Heart left ventricle (tissue), 16 donors: ENCODE measurements at regions of chr15 and their contacts with region 1.

Region 1: DNA sequence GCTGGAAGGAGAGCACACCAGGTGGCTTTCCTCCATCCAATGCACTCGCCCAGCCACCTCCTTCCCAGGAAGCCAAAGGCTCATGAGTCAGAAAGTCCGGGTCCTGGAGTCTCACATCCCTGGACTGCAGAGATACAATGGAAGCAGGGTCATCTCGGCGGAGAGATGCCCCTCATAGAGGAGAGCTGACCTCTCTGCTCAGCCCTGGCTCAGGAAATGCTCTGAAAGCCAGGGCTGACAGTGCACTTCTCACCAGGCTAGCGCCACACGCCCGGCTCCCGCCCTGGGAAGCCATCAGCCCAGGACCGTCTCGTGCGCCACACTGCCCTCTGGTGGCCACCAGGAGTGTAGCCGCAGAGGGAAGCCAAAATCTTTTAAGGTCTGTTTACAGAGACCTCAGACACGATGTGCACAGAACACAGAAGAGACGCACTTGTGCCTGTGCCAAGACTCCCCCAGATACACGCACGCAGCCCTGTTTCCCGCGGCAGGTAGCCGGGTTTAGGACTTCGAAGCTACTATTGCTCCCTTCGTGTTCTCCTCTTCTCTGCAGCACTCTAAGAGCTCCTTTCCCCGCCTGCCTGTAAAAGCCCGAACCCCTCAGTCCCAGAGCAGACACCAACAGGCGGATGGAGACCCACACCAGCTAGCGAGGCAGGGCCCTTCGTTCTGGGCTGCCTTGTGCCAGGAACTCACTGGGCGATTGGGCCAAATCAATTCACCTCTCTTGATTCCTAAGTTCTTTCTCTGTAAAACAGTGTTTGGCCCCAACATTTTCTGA is 9.7 kb downstream of the NTRK3 start:
- DNase-seq: peak; percentile 56 to 87 (median 76)
- ATAC-seq: peak; percentile 44 to 89 (median 82)
- H3K4me3 ChIP-seq: peak overlapping the region in 3 of 12 donors; percentile 17 to 25 (median 23)
- H3K27ac ChIP-seq: no peak overlapping the region
- H3K4me1 ChIP-seq: peaks cover 0 to 23% (median 4%) of the 10 kb centered on the region in 12 donors
- H3K27me3 ChIP-seq: peaks cover 0 to 6% (median 0%) of the 10 kb centered on the region in 9 donors
- CTCF ChIP-seq: peak; percentile 93 to 99 (median 96)
- POLR2A ChIP-seq: no peak

Region 2: GRCh38 chr15:86915811-86916331 is 1331.0 kb before region 1 on chr15:
- intact Hi-C with region 1: loop called in 8 of 10 experiments (anchors 5 to 10 kb)
- DNase-seq: peak in 2 of 5 donors; percentile 21 to 33
- ATAC-seq: peak; percentile 66 to 81 (median 72)
- H3K4me3 ChIP-seq: no peak overlapping the region
- H3K27ac ChIP-seq: peak overlapping the region in 3 of 12 donors; percentile 68 to 78 (median 69)
- H3K4me1 ChIP-seq: peaks cover 0 to 34% (median 13%) of the 10 kb centered on the region in 12 donors
- H3K27me3 ChIP-seq: no peaks in the 10 kb centered on the region
- CTCF ChIP-seq: peak; percentile 17 to 68 (median 52)
- POLR2A ChIP-seq: no peak

Region 3: GRCh38 chr15:87033056-87033455 is 1213.8 kb before region 1 on chr15:
- intact Hi-C with region 1: loop called in 2 of 10 experiments (anchors 10 kb)
- DNase-seq: no peak
- ATAC-seq: no peak
- H3K4me3 ChIP-seq: no peak overlapping the region
- H3K27ac ChIP-seq: no peak overlapping the region
- H3K4me1 ChIP-seq: peaks cover 0 to 8% (median 0%) of the 10 kb centered on the region in 12 donors
- H3K27me3 ChIP-seq: no peaks in the 10 kb centered on the region
- CTCF ChIP-seq: peak in 4 of 12 donors; percentile 8 to 21 (median 16)
- POLR2A ChIP-seq: no peak

Region 4: DNA sequence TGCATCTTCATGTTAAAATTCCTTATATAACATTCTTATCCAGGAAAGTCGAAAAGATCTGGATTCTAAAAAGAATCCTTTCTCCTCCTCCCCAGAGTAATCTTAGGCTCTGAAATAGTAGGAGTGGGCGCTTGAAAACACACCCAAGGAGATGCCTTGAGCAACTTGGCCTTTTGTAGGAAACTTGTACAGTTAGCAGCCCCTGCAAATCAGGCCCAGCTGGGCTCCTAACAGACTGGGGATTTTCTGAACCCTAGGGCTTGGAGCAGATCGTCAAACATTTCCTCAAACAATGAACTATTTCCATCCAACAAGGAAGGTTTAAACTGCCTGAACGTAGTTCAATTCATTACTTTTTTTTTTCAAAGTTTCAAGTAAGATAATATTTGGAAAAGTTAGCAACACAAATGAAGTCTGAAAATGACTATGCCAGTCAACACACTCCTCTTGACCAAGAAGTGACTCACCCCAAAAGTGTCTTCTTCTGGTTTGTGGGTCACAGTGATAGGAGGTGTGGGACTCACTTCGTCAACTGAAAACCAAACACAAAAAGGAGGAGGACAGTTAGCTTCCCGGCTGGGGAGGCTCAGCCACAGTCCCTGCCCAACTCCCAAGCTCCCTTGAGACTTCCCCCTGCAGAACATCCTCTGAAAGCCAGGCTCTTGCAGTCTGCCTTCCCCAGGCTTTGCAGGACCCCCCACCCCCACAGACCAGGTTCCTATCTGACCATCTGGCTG is 120.0 kb before region 1 on chr15:
- intact Hi-C with region 1: no loop called
- DNase-seq: no peak
- ATAC-seq: no peak
- H3K4me3 ChIP-seq: no peak overlapping the region
- H3K27ac ChIP-seq: no peak overlapping the region
- H3K4me1 ChIP-seq: no peaks in the 10 kb centered on the region
- H3K27me3 ChIP-seq: no peaks in the 10 kb centered on the region
- CTCF ChIP-seq: no peak
- POLR2A ChIP-seq: no peak

Region 5: DNA sequence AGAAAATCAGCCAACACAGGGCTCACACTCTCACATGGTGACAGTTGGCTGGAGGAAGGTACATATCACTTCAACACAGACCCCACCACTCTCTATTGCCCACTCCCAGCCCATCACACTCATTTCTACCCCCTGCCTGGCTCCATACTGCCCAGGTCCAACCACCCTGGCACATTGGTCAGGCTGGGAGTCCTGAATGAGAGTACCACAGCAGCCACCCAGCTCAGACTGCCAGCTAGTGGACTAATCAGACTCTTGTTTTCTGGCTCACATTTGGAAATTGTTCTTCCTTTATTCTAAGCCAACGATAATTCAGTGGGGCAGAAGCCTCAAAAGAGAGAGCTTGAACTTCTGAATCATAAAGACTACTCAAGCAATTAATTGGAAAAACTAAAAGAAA is 200.3 kb after region 1 on chr15:
- intact Hi-C with region 1: loop called in 4 of 10 experiments (anchors 5 to 10 kb)
- DNase-seq: no peak
- ATAC-seq: no peak
- H3K4me3 ChIP-seq: no peak overlapping the region
- H3K27ac ChIP-seq: no peak overlapping the region
- H3K4me1 ChIP-seq: no peaks in the 10 kb centered on the region
- H3K27me3 ChIP-seq: no peaks in the 10 kb centered on the region
- CTCF ChIP-seq: no peak
- POLR2A ChIP-seq: no peak

Region 6: DNA sequence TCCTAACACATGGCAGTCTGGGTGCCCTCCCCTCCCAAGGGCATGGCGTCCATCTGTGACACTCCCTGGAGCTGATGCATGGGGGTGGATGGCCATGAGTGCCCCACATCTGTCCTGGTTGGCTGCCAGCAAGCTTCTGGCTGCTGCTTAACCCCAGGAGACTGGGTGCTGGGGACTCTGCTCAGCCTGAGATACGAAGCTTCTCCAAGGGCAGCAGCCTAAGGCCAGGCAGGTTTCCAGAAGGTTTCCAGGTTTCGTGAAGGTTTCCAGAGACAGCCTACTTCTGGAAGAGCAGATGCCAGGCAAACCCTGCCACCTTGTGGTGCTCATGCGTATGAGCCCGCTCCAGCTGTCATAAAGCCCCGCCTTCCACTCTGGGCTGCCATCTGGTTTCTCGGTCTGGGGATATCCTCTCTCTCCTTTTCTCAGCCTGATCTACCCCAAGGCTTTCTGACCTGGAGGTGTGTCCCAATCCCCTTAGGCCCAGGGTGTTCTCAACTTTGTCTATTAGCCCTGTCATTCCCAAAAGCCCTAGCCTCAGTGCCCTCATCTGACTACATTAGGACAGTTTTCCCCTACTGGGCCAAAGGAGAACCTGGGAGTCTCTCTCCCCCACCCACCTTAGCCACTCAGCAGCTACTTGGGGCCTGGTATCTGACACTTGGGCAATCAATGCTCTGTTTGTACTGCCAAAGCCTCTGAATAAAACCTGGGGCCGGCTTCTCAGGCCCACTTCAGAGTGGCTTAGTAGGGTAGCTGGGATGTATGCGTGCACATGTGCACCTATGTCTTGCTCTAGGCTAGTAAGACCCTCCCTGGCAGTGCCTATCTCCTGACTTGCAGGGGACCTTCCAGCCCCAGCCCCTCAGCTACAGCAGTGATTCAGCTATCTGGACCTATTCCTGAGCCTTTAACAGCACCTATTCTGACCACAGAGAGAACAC is 208.3 kb after region 1 on chr15:
- intact Hi-C with region 1: loop called in 3 of 10 experiments (anchors 5 to 10 kb)
- DNase-seq: peak in 4 of 5 donors; percentile 32 to 65 (median 42)
- ATAC-seq: peak; percentile 26 to 83 (median 80)
- H3K4me3 ChIP-seq: no peak overlapping the region
- H3K27ac ChIP-seq: peak overlapping the region in 3 of 12 donors; percentile 1 to 23 (median 2)
- H3K4me1 ChIP-seq: peaks cover 0 to 16% (median 7%) of the 10 kb centered on the region in 12 donors
- H3K27me3 ChIP-seq: no peaks in the 10 kb centered on the region
- CTCF ChIP-seq: peak; percentile 44 to 74 (median 56)
- POLR2A ChIP-seq: no peak